ENCODE measurements at regions of chr13 and their contacts with region 1.

Region 1: GRCh38 chr13:19863323-19864023 is at the start of gene ZMYM5:
- DNase-seq: peak; percentile 99 to 100 (median 100)
- ATAC-seq: peak; percentile 96 to 99 (median 98)
- H3K4me3 ChIP-seq: peak within 1 kb of the TSS; percentile 73 to 97 (median 88)
- H3K27ac ChIP-seq: peak within 1 kb of the TSS; percentile 89 to 100 (median 98)
- H3K4me1 ChIP-seq: peaks cover 0 to 33% (median 20%) of the 10 kb centered on the region in 12 donors
- H3K27me3 ChIP-seq: no peaks in the 10 kb centered on the region
- CTCF ChIP-seq: no peak
- POLR2A ChIP-seq: peak in 1 of 2 donors; percentile 91
- total RNA-seq, gene ZMYM5: 5.7 to 10.2 (median 7.5) TPM

Region 2: GRCh38 chr13:19633479-19634255 is 229.8 kb before region 1 on chr13 and contains the start of gene MPHOSPH8:
- intact Hi-C with region 1: loop called in 6 of 10 experiments (anchors 5 to 10 kb)
- DNase-seq: peak; percentile 95 to 97 (median 96)
- ATAC-seq: peak; percentile 99
- H3K4me3 ChIP-seq: peak within 1 kb of the TSS; percentile 58 to 96 (median 82)
- H3K27ac ChIP-seq: peak within 1 kb of the TSS; percentile 79 to 98 (median 94)
- H3K4me1 ChIP-seq: peaks cover 7 to 40% (median 30%) of the 10 kb centered on the region in 12 donors
- H3K27me3 ChIP-seq: no peaks in the 10 kb centered on the region
- CTCF ChIP-seq: no peak
- POLR2A ChIP-seq: peak; percentile 78
- total RNA-seq, gene MPHOSPH8: 15.2 to 39.3 (median 26.1) TPM

Region 3: GRCh38 chr13:19782049-19782726 is 81.3 kb before region 1 on chr13:
- intact Hi-C with region 1: loop called in 7 of 10 experiments (anchors 1 to 5 kb)
- DNase-seq: peak; percentile 41 to 83 (median 59)
- ATAC-seq: peak; percentile 44 to 73 (median 71)
- H3K4me3 ChIP-seq: peak overlapping the region; percentile 62 to 99 (median 86)
- H3K27ac ChIP-seq: peak overlapping the region; percentile 87 to 99 (median 92)
- H3K4me1 ChIP-seq: peaks cover 0 to 16% (median 8%) of the 10 kb centered on the region in 12 donors
- H3K27me3 ChIP-seq: no peaks in the 10 kb centered on the region
- CTCF ChIP-seq: peak in 1 of 12 donors; percentile 8
- POLR2A ChIP-seq: no peak

Region 4: DNA sequence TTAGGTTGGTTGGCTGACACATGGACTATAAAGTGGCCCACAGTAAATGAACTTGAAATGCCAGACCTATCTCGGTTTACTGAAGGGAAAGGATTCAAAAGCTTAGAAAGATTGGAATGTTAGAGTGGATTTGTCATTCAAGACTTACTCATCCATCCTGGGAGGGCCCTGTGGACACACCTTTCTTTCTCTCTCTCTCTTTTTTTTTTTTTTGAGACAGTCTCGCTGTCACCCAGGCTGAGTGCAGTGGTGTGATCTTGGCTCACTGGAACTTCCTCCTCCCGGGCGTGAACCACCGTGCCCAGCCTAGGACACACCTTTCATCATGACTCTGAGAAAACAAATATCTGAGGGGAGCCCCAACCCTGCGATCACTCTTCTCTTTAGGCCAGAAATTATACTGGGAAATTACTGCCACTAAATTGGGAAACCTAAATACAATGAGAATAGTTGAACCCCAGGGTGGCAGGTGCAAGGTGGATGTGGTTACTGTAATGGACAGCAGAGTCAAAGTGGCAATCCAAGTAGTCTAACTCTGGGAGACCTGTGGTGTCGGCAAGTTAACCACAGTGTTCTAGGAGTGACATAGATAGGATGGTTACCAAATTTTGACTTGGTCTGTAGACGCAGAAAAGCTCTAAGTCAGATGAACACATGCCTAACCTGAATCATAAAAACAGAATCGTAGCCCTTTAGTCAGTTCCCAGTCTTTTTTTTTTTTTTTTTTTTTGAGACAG is 47.0 kb after region 1 on chr13:
- intact Hi-C with region 1: no loop called
- DNase-seq: no peak
- ATAC-seq: no peak
- H3K4me3 ChIP-seq: no peak overlapping the region
- H3K27ac ChIP-seq: no peak overlapping the region
- H3K4me1 ChIP-seq: no peaks in the 10 kb centered on the region
- H3K27me3 ChIP-seq: no peaks in the 10 kb centered on the region
- CTCF ChIP-seq: no peak
- POLR2A ChIP-seq: no peak

Measured in heart left ventricle (tissue), 16 donors.